ENCODE measurements at regions of chr4 and their contacts with region 1.

Region 1: DNA sequence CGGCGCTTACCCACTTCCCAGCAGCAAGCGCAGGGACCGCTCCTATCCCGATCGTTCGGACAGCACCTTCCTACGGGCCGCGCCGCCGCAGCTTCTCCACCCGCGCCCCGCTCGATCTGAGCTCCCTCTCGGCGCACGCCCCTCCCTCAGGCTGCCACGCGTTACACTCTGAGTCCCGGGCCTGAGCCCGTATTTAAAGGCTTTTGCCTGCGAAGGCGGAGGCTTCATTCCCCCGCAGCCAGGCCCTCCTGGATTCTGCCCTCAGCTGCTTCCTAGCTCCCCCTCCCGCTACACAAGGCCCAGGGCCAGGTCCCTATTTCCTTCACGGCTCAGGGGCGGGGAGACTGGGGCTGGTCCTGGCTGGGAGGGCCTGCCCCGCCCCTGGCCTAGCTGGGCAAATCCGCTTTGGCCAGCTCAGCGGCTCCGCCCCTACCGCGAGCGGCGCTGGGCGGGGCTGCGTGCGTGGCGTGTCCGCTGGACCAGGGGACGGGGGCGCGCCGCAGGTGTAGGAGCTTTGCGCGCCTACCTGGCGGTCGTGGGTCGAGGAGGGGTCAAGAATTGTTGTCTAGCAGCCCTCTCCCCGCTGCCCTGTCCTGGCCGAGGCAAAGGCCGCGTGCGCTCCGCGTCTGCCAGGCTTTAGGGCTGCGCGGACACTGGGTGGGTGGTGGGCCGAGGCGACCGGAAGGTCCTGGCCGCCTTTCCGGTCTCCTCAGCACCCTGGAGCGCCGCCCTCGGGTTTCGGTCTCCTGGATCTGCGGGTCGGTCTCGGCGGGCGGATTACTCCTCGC is at the start of gene UGDH:
- DNase-seq: peak; percentile 85 to 91 (median 88)
- H3K4me3 ChIP-seq: peak within 1 kb of the TSS; percentile 71 to 83 (median 83)
- H3K4me3 Mint-ChIP-seq: peak within 1 kb of the TSS; percentile 99 to 100
- H3K27ac ChIP-seq: peak within 1 kb of the TSS; percentile 24 to 90
- H3K27ac Mint-ChIP-seq: peak within 1 kb of the TSS; percentile 66 to 96 (median 88)
- H3K4me1 ChIP-seq: peaks cover 17 to 19% of the 10 kb centered on the region in 2 donors
- H3K4me1 Mint-ChIP-seq: peaks cover 22% of the 10 kb centered on the region
- H3K27me3 ChIP-seq: no peaks in the 10 kb centered on the region
- H3K27me3 Mint-ChIP-seq: peaks cover 0 to 2% (median 0%) of the 10 kb centered on the region in 3 donors
- CTCF ChIP-seq: no peak
- polyA plus RNA-seq, gene UGDH: 4.6 to 19.7 (median 16.7) TPM

Region 2: DNA sequence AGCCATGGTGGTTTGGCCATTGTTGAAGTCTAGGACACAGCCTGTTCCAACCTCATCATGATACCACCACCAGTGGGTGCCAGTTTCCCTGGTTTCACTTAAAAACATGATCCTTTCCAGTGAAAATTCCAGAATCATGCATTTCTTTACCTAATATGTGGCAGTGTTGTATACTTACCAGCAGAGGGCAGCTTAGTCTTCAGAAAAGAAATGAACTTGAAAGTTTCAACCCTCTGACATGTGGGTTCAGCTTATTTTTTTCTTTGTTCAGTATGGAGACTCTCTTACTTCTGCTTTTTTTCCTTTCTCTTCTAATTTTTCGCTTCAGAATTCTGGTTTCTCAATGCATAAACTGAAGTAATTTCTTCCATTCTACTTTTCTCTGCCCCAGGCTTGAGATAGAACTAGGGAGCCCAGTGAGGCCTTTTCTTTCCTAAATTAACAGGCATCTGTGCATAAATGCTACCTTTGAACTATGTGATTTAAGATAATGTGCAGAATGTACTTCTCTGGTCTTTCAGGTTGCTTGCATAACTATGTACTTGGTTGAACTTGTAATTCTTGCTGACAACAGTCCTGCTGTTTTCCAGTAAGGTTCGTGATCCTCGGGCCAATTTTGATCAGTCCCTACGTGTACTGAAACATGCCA is 57.9 kb before region 1 on chr4:
- intact Hi-C with region 1: loop called in 1 of 2 experiments (anchors 10 kb)
- DNase-seq: peak; percentile 67 to 81 (median 81)
- H3K4me3 ChIP-seq: peak overlapping the region; percentile 7 to 46 (median 27)
- H3K4me3 Mint-ChIP-seq: peak overlapping the region; percentile 24 to 76
- H3K27ac ChIP-seq: peak overlapping the region in 1 of 2 donors; percentile 60
- H3K27ac Mint-ChIP-seq: peak overlapping the region; percentile 81 to 92 (median 89)
- H3K4me1 ChIP-seq: peaks cover 7 to 10% of the 10 kb centered on the region in 2 donors
- H3K4me1 Mint-ChIP-seq: peaks cover 11% of the 10 kb centered on the region
- H3K27me3 ChIP-seq: no peaks in the 10 kb centered on the region
- H3K27me3 Mint-ChIP-seq: no peaks in the 10 kb centered on the region
- CTCF ChIP-seq: peak; percentile 83

Region 3: DNA sequence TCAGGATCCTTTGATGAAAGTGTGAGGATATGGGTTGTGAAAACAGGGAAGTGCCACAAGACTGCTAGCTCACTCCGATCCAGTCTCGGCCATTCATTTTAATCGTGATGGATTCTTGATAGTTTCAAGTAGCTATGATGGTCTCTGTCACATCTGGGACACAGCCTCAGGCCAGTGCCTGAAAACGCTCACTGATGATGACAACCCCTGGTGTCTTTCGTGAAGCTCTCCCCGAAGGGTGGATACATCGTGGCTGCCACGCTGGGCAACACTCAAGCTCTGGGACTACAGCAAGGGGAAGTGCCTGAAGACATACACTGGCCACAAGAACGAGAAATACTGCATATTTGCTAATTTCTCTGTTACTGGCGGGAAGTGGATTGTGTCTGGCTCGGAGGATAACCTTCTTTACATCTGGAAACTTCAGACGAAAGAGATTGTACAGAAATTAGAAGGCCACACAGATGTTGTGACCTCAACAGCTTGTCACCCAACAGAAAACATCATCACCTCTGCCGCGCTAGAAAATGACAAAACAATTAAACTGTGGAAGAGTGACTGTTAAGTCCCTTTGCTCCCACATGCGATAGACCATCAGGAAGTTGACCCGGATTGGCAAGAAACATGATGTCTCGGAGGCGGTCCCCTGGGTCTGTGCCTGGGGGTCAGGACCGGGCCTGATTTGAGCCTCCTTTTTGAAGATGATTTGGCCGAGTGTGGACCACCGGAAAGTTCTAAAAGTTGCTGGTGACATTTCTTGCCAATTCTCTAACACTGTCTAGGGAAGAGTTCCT is 46.4 kb before region 1 on chr4:
- intact Hi-C with region 1: loop called in 1 of 2 experiments (anchors 5 kb)
- DNase-seq: peak; percentile 38 to 46 (median 45)
- H3K4me3 ChIP-seq: peak overlapping the region; percentile 39 to 74 (median 56)
- H3K4me3 Mint-ChIP-seq: peak overlapping the region; percentile 84 to 94
- H3K27ac ChIP-seq: peak overlapping the region; percentile 59 to 78
- H3K27ac Mint-ChIP-seq: peak overlapping the region; percentile 81 to 92 (median 86)
- H3K4me1 ChIP-seq: peaks cover 33 to 34% of the 10 kb centered on the region in 2 donors
- H3K4me1 Mint-ChIP-seq: peaks cover 35% of the 10 kb centered on the region
- H3K27me3 ChIP-seq: no peaks in the 10 kb centered on the region
- H3K27me3 Mint-ChIP-seq: peaks cover 0 to 7% (median 0%) of the 10 kb centered on the region in 3 donors
- CTCF ChIP-seq: no peak

Region 4: GRCh38 chr4:39638354-39639240 is 111.1 kb after region 1 on chr4 and contains the start of gene SMIM14:
- intact Hi-C with region 1: loop called (anchors 5 kb)
- DNase-seq: peak; percentile 98 to 99 (median 98)
- H3K4me3 ChIP-seq: peak within 1 kb of the TSS; percentile 78 to 98 (median 93)
- H3K4me3 Mint-ChIP-seq: peak within 1 kb of the TSS; percentile 93 to 97
- H3K27ac ChIP-seq: peak within 1 kb of the TSS; percentile 95 to 96
- H3K27ac Mint-ChIP-seq: peak within 1 kb of the TSS; percentile 97 to 99 (median 98)
- H3K4me1 ChIP-seq: peaks cover 18 to 25% of the 10 kb centered on the region in 2 donors
- H3K4me1 Mint-ChIP-seq: peaks cover 27% of the 10 kb centered on the region
- H3K27me3 ChIP-seq: no peaks in the 10 kb centered on the region
- H3K27me3 Mint-ChIP-seq: no peaks in the 10 kb centered on the region
- CTCF ChIP-seq: no peak
- polyA plus RNA-seq, gene SMIM14: 13.6 to 152 (median 140) TPM

Region 5: DNA sequence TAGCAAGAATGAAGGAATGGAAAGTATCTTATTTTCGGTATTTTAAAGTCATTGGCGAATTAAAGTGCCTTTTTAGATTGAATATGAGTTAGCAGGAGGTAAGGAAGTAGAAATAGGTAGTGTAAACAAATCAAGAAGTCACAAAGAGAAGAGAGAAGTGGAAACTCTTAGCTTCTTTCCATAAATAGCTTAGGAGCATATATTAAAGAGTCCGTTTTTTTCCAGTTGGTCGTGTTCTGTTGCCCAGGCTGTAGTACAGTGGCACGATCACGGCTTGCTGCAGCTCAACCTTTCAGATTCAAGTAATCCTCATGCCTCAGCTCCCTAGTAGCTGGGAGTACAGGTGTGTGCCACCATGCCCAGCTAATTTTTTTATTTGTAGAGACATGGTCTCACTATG is 226.8 kb after region 1 on chr4:
- intact Hi-C with region 1: no loop called
- DNase-seq: no peak
- H3K4me3 ChIP-seq: no peak overlapping the region
- H3K4me3 Mint-ChIP-seq: no peak overlapping the region
- H3K27ac ChIP-seq: peak overlapping the region in 1 of 2 donors; percentile 67
- H3K27ac Mint-ChIP-seq: peak overlapping the region in 3 of 7 donors; percentile 10 to 42 (median 37)
- H3K4me1 ChIP-seq: peaks cover 7 to 8% of the 10 kb centered on the region in 2 donors
- H3K4me1 Mint-ChIP-seq: peaks cover 16% of the 10 kb centered on the region
- H3K27me3 ChIP-seq: no peaks in the 10 kb centered on the region
- H3K27me3 Mint-ChIP-seq: peaks cover 0 to 1% (median 0%) of the 10 kb centered on the region in 3 donors
- CTCF ChIP-seq: no peak

Measured in CD14-positive monocyte (primary cell).